ENCODE measurements at regions of chr21 and their contacts with region 1.

Region 1: DNA sequence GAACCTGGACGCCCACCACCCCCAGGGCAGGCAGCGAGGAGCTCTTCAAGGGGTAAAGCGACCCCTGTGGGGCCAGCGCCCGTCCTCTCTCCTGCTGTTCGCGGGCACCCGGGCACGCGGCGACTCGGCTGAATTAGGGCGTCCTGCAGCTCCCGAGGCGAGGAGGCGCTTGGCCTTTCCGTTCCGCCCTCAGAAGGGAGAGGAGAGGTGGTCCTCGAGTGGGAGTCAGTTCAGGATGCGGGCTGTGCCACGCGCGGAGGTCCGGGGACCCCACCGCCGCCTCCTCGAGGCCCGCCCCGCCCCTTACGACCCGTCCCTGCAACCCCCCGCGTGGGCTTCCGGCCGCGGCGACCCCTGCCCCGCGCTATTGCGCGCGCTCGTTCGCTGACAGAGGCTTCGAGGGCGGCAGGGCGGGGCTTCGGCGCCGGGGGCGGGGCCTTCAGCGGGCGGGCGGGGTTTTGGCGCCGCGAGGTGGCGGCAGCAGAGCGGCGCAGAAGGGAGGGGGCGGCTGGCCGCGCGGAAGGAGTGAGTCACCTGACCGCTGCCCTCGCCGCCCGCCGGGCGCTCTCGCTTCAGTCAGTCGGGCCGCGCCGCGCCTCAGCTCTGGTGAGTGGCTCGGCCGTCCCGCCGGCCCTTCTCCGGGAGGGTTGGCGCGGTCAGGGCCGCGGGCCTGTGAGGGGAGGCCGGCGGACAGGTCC is at the start of gene BACH1:
- DNase-seq: peak; percentile 78
- H3K4me3 Mint-ChIP-seq: peak within 1 kb of the TSS; percentile 91
- H3K27ac Mint-ChIP-seq: peak within 1 kb of the TSS; percentile 88
- H3K4me1 Mint-ChIP-seq: peaks cover 59% of the 10 kb centered on the region
- H3K27me3 Mint-ChIP-seq: peaks cover 4% of the 10 kb centered on the region
- total RNA-seq, gene BACH1: 22.7 and 23.1 TPM in 2 replicates

Region 2: DNA sequence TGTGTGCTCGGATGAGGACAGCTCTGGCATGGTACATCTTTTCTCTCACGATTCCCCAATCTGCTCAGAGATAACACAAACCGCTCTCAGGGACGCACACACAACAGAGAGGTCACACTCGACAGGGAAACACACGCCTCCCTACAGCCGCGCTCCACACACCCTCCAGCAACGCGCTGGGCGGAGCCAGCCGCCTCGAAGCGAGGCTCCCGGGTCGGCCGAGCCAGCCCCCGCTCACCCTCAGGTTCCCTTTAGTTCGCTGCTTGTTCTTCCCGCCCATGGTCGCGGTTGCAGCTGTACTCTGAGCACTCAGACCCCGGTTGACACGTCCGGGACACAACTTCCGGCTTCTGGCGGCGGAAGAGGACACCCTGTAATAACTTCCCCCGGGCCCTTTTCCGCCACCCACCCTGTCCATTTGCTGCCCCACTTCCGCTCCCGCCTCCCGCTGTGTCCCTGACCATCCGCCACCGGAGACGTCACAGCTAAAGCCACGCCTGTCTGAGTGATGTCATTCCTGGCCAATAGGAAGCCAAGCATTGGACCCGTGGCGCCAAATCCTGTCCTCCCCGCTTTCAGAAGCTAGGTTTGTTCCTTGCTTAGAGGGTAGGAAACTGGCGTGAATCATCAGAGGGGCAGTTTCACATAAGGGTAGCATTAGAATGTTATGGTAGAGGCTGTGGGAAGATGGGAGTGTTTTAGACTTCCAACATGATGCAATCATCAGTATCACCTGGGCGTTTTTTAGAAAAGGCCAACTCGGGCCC is 305.8 kb before region 1 on chr21 and contains the start of gene LTN1:
- intact Hi-C with region 1: loop called (anchors 2 kb)
- DNase-seq: peak; percentile 98
- H3K4me3 Mint-ChIP-seq: peak within 1 kb of the TSS; percentile 97
- H3K27ac Mint-ChIP-seq: peak within 1 kb of the TSS; percentile 97
- H3K4me1 Mint-ChIP-seq: peaks cover 47% of the 10 kb centered on the region
- H3K27me3 Mint-ChIP-seq: no peaks in the 10 kb centered on the region
- total RNA-seq, gene LTN1: 25.6 and 28.4 TPM in 2 replicates

Region 3: DNA sequence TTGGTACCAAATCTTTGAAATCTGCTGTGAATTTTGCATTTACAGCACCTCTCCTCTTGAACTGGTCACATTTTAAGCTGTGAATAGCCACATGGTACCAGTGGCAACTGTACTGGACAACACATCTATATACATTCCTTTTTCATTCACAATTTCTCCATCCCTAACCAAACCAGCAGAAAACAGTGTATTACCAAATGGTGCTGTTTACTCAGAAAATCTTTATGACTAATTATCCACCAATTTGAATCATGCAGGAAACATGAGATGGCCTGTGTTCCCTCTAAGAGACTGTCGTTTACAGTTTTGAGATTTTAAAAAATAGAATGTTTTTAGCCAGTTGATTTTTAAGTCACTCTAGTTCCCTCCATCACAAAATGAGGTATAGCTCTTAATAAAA is 207.5 kb before region 1 on chr21:
- intact Hi-C with region 1: loop called (anchors 1 kb)
- DNase-seq: no peak
- H3K4me3 Mint-ChIP-seq: no peak overlapping the region
- H3K27ac Mint-ChIP-seq: peak overlapping the region; percentile 56
- H3K4me1 Mint-ChIP-seq: peaks cover 24% of the 10 kb centered on the region
- H3K27me3 Mint-ChIP-seq: peaks cover 13% of the 10 kb centered on the region

Region 4: DNA sequence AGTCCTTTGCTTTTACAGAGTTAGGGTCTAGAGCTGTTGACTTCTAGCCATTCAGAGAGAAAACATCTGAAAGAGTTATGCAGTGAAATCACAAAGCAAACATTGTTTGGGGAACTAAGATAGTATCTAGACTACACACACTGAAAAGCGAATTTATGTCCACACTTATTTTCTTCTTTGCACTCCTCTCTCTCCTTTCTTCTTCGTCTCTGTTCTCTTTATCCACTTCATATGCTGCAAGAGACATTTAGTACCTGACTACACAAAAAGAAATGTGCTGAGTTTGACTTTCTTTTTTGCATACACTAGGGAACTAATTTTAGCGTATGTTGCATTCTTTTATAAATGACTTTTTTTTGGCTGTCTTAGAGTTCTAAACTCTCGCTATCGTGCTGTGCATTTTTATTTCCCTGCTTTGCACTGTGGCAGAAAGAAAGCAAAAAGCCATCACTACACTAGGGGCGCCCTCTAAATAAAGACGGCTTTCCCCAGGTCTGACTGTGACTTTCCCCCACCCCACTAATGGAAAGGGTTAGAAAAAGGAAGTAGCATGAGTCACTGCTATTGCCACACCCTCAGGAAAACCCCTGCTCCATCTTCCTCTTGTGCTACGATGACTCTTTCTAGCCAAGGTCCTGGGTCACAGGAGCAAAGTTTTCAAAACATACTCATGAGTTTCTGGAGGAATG is 102.4 kb before region 1 on chr21:
- intact Hi-C with region 1: loop called (anchors 1 kb)
- DNase-seq: peak; percentile 77
- H3K4me3 Mint-ChIP-seq: peak overlapping the region; percentile 80
- H3K27ac Mint-ChIP-seq: peak overlapping the region; percentile 88
- H3K4me1 Mint-ChIP-seq: peaks cover 44% of the 10 kb centered on the region
- H3K27me3 Mint-ChIP-seq: peaks cover 2% of the 10 kb centered on the region

Region 5: DNA sequence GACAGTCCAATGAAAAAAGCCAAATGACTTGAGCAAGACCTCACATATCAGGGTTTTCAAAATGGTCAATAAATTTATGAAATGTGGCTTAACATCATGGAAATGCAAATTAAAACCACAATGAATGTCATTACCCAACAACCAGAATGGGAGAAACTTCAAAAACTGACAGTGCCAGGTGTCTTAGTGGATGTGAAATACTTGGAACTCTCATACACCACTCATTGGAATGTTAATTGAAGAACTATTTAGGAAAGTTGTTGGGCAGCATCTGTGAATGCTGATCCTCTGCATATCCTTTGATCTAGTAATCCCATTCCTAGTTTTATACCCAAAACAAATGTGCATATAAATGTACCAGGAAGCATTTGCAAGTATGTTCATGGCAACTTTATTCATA is 18.9 kb before region 1 on chr21:
- intact Hi-C with region 1: no loop called
- DNase-seq: no peak
- H3K4me3 Mint-ChIP-seq: no peak overlapping the region
- H3K27ac Mint-ChIP-seq: no peak overlapping the region
- H3K4me1 Mint-ChIP-seq: no peaks in the 10 kb centered on the region
- H3K27me3 Mint-ChIP-seq: peaks cover 19% of the 10 kb centered on the region

Region 6: DNA sequence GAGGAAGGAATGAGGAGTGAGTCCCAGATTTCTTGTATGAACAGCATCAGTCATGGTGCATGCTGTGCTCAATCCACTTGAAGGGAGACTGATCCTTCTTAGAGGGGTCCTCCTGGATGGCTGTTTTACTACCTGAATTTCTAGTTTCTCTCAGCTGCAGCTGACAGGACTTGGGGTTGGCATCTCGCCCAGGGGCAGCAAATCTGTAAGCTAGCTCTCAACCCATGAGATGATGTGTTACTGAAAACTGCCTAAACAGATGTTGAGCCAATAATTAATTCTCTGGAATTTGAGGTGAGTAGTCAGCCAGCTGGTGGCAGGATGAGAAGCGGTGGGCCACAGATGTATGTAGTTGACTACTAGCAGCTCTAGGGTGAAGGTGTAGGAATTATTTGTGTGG is 19.9 kb after region 1 on chr21:
- intact Hi-C with region 1: no loop called
- DNase-seq: no peak
- H3K4me3 Mint-ChIP-seq: no peak overlapping the region
- H3K27ac Mint-ChIP-seq: no peak overlapping the region
- H3K4me1 Mint-ChIP-seq: peaks cover 16% of the 10 kb centered on the region
- H3K27me3 Mint-ChIP-seq: no peaks in the 10 kb centered on the region

Region 7: DNA sequence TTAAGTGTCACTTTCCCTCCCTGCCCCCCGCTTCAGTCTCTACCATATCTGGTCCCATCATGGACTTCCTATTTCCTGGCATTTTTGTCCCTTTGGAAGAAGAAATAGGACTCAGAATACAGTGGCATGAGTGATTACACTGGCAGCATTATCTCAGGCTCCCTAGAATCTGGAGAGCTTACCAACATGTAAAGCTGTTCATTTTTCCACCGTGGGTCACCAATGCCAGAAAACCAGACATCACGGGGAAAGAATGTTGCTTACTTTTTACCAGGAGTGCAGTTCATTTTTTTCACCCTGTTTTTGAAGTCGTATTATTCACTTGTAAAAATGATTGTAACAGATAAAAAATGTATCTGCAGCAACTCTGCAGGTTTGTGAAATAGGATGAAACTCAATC is 45.0 kb after region 1 on chr21:
- intact Hi-C with region 1: loop called (anchors 1 kb)
- DNase-seq: no peak
- H3K4me3 Mint-ChIP-seq: no peak overlapping the region
- H3K27ac Mint-ChIP-seq: no peak overlapping the region
- H3K4me1 Mint-ChIP-seq: peaks cover 32% of the 10 kb centered on the region
- H3K27me3 Mint-ChIP-seq: no peaks in the 10 kb centered on the region

Measured in activated T-helper 1 cell treated with anti-CD3 and anti-CD28 coated beads, Interleukin-12 subunit alpha, Interleukin-12 subunit beta, Interleukin-2, Interleukin-4 antibody, amounts not matched to agents 30 ng/mL and 10 ng/mL and 1 ng/mL, durations not matched to agents 14 hours and 24 hours and 36 hours (primary cell).